Tibial artery (tissue), 4 donors: ENCODE measurements at regions of chr21 and their contacts with region 1.

Region 1: GRCh38 chr21:40120940-40121575 is 253.8 kb downstream of the PCP4 start:
- DNase-seq: no peak
- H3K4me3 ChIP-seq: no peak overlapping the region
- H3K27ac ChIP-seq: no peak overlapping the region
- H3K4me1 ChIP-seq: peaks cover 0 to 10% (median 0%) of the 10 kb centered on the region in 4 donors
- H3K27me3 ChIP-seq: no peaks in the 10 kb centered on the region
- CTCF ChIP-seq: peak; percentile 89 to 93

Region 2: GRCh38 chr21:39799178-39799577 is 321.9 kb before region 1 on chr21:
- intact Hi-C with region 1: loop called (anchors 10 kb)
- DNase-seq: no peak
- H3K4me3 ChIP-seq: no peak overlapping the region
- H3K27ac ChIP-seq: no peak overlapping the region
- H3K4me1 ChIP-seq: peaks cover 0 to 4% (median 0%) of the 10 kb centered on the region in 4 donors
- H3K27me3 ChIP-seq: no peaks in the 10 kb centered on the region
- CTCF ChIP-seq: no peak

Region 3: DNA sequence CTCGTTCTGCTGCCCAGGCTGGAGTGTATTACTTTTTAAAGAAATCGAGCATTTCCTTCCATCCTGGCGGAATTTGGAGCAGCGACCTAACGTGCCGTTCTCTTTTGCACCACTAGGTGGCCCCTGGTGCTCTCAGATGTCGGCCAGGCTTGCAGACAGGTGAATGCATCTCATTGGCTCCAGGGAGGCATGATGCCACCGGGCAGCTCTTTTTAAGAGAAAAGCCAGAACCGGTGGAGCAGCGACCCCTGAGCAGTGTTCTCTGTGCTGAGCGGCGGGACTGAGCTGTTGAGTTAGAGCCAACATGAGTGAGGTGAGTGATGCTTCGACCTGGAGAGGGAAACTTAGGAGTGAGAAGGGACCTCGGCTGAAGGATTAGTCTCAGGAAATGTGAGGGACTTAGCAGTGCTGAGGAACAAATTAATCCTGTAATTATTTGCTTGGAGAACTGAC is 253.8 kb before region 1 on chr21 and contains the start of gene PCP4:
- intact Hi-C with region 1: loop called (anchors 2 kb)
- DNase-seq: peak in 1 of 2 donors; percentile 69
- H3K4me3 ChIP-seq: no peak within 1 kb of the TSS
- H3K27ac ChIP-seq: no peak within 1 kb of the TSS
- H3K4me1 ChIP-seq: peaks cover 0 to 9% (median 0%) of the 10 kb centered on the region in 4 donors
- H3K27me3 ChIP-seq: no peaks in the 10 kb centered on the region
- CTCF ChIP-seq: peak; percentile 76 to 82